ENCODE measurements at regions of chr1 and their contacts with region 1.

Region 1: GRCh38 chr1:11893907-11894251 is 32.3 kb downstream of the KIAA2013 start:
- DNase-seq: peak; percentile 86
- ATAC-seq: peak; percentile 92
- H3K4me3 Mint-ChIP-seq: peak overlapping the region; percentile 16
- H3K27ac Mint-ChIP-seq: no peak overlapping the region
- H3K4me1 Mint-ChIP-seq: no peaks in the 10 kb centered on the region
- H3K27me3 Mint-ChIP-seq: peaks cover 23% of the 10 kb centered on the region

Region 2: DNA sequence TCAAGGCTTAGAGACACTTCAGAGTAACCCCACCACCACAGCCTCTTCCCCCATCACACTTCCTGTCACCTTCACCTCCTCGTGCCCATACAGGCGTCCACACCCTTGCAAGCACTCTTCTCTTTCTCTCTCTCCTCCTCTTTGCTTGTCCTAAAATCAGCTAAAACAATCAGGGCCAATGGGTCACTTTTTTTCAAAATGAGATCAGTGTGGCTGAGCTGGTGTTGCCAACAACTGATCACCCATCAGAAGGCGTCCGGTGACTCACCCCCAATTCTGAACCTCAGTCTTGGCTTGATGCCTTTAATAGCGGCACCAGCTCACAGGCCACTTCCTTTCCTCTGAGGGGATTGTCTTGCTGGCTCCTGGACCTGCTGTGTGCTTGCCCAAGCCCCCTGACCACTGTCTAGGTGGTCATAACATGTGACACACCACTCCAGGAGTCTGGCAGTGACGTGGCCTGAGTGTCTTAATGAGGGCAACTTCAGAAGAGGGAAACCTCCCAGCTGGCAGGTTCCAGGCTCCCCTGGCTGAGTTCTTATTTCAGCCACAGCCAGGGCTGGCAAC is 200.8 kb before region 1 on chr1:
- CTCF ChIA-PET with region 1: no interaction called
- POLR2A ChIA-PET with region 1: no interaction called
- intact Hi-C with region 1: no loop called
- DNase-seq: peak; percentile 67
- ATAC-seq: peak; percentile 86
- H3K4me3 Mint-ChIP-seq: no peak overlapping the region
- H3K27ac Mint-ChIP-seq: no peak overlapping the region
- H3K4me1 Mint-ChIP-seq: peaks cover 29% of the 10 kb centered on the region
- H3K27me3 Mint-ChIP-seq: peaks cover 34% of the 10 kb centered on the region

Region 3: DNA sequence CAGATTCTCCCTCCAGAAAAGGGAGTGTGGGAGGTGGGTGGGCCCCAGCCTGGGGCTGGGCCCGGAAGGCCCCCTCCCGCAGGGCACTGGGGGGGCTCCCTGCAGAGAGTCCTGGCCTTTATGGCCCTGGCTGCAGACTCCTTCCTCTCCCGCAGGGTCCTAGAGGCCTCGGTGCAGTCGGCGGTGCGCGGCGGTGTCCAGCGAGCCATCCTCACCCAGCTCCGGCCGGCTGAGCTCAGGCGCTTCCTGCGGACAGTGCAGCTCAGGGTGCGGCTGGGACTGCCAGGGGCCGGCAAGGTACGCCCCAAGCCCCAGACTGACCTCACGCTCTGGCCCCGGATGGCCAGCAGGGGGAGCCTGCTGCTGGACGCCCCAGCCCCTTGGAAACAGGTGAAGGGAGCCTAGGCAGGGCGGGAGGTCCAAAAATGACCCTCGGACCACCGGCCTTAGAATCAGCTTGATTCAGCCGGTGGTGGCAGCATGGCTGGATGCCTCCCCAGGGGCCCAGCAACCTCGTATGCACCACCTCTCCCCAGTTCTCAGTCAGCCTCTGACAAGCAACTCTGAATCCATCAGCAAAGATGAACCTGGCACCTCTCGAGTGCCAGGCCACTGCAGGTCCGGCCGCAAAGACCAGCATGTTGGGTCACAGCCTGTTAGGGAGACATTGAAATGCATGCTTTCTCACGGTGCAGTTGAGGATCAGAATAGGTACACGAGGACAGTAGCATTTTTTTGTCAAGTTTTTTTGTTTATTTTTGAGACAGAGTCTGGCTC is 108.7 kb before region 1 on chr1:
- CTCF ChIA-PET with region 1: no interaction called
- POLR2A ChIA-PET with region 1: no interaction called
- intact Hi-C with region 1: loop called in 1 of 2 experiments (anchors 5 kb)
- DNase-seq: peak; percentile 62
- ATAC-seq: peak; percentile 82
- H3K4me3 Mint-ChIP-seq: no peak overlapping the region
- H3K27ac Mint-ChIP-seq: no peak overlapping the region
- H3K4me1 Mint-ChIP-seq: peaks cover 5% of the 10 kb centered on the region
- H3K27me3 Mint-ChIP-seq: no peaks in the 10 kb centered on the region

Region 4: DNA sequence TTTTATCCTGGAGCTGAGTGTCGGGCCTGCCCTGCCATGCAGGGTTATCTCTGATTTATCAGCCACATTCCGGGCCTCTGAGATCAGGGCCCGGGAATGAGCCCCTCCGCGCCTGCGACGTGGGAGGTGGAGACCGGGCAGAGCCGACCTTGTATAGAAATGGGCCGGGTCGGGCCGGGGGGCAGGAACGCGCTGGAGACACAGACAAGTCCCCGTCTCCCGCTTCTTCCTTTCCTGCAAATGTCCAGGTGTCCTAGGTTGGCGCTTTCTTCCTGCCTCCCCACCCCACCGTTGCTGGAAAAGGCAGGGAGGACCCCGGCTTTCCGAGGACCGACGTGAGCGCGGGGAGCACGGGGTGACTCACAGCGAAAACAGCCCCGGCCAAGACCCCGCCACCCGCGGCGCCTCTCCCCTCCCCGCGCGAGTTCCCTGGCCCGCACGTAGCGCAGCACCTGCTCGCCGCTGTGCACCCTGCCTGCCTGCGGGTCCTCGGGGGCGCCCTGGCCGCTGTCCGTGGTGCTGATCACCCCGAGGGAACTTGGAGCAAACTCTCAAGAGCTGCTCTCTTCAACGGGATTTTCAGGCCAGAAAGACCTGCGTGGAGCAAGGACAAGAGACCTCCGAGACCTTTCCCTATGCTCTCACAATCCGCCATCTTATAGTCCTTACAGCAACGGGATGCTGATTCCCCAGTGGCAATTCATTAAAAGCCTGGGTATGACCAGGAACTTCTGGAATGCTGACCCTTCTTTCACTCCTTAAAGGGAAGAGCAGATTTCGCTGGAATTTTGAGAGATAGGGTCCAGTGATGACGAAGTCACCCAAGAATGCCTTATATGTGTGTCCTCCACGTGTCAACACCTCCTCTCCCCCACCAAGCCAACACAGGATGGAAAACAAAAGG is 34.7 kb before region 1 on chr1:
- CTCF ChIA-PET with region 1: interaction called, 3 read pairs
- POLR2A ChIA-PET with region 1: no interaction called
- intact Hi-C with region 1: loop called in 1 of 2 experiments (anchors 2 kb)
- DNase-seq: peak; percentile 82
- ATAC-seq: peak; percentile 60
- H3K4me3 Mint-ChIP-seq: no peak overlapping the region
- H3K27ac Mint-ChIP-seq: no peak overlapping the region
- H3K4me1 Mint-ChIP-seq: no peaks in the 10 kb centered on the region
- H3K27me3 Mint-ChIP-seq: peaks cover 46% of the 10 kb centered on the region

Region 5: DNA sequence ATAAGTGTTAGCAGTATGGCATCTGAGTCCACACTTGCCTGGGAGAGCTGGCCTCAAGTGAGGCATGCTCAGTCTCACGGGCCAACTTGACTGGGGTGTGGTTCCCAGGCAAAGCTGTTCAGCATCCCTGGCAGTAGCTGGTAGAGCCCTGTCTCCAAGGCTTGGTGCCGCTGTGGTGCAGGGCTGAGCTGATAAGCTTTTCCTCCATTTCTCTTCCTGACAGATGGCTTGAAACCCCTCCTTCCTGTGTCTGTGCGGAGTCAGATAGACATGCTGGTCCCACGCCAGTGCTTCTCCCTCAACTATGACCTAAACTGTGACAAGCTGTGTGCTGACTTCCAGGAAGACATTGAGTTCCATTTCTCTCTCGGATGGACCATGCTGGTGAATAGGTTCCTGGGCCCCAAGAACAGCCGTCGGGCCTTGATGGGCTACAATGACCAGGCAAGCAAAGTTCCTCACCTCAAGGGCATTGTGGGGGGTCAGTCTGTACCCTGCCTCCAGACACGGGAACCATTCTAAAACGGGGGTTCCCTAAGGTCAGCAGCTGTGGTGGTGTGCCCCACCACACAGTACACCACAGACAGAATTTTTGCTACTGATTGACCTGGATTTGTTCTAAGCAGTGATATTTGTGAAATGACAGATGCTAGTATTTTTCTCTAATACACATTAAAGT is 111.7 kb after region 1 on chr1:
- CTCF ChIA-PET with region 1: no interaction called
- POLR2A ChIA-PET with region 1: no interaction called
- intact Hi-C with region 1: no loop called
- DNase-seq: no peak
- ATAC-seq: no peak
- H3K4me3 Mint-ChIP-seq: no peak overlapping the region
- H3K27ac Mint-ChIP-seq: peak overlapping the region; percentile 12
- H3K4me1 Mint-ChIP-seq: no peaks in the 10 kb centered on the region
- H3K27me3 Mint-ChIP-seq: no peaks in the 10 kb centered on the region